ENCODE measurements at regions of chr11 and their contacts with region 1.

Region 1: GRCh38 chr11:47552566-47553416 is at the start of gene CELF1:
- DNase-seq: peak; percentile 87 to 94 (median 90)
- ATAC-seq: peak; percentile 96
- H3K4me3 ChIP-seq: peak within 1 kb of the TSS; percentile 100
- H3K27ac ChIP-seq: peak within 1 kb of the TSS; percentile 92
- H3K4me1 ChIP-seq: peaks cover 11 to 18% of the 10 kb centered on the region in 2 experiments; a peak in 4 of 5 replicates
- H3K27me3 ChIP-seq: no peaks in the 10 kb centered on the region
- CTCF ChIP-seq: peak; percentile 80 to 93 (median 92)
- EP300 ChIP-seq: no peak
- POLR2A ChIP-seq: peak; percentile 77
- RAD21 ChIP-seq: peak; percentile 22 to 54; a peak in 3 of 4 replicates
- polyA plus RNA-seq, gene CELF1: 11.3 to 21.6 TPM

Region 2: DNA sequence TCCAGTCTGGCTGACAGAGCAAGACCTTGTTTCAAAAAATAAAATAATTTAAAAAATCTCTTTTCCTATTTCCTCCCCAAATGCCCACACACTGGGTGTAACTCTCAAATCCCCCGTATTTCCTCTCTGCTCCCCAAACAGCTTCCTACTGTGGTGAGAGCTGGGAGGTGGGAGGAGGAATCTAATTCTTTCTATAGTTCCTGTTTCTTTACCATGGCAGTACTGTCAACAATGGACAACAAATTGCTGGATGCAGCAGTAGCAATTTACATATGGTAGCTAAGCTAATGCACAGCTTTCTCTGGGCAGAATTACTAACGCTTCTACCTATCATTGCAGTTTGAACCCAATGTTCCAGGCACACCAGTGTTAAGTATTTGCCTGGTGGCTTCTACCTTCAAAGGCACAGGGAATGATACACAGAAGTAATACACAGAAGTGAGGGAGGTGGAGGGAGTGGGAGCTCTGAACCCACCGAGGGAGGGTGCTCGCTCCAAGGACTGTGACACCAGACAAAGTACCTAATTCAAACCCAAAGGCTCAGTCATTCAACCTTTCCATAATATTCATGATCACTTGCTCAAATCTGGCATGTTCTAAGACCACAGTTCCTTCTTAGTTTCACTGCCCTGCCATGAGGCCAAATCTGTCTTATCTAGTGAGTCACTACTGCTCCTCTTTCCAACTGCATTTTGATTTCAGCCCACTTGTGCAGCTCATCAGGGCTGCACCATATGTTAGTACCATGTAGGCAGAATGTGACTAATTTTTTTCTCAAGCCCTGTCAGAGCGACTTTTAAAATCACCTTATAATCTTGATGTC is 37.8 kb before region 1 on chr11:
- CTCF ChIA-PET with region 1: no interaction called
- POLR2A ChIA-PET with region 1: interaction called, 3 read pairs
- in situ Hi-C with region 1: no loop called
- intact Hi-C with region 1: loop called (anchors 5 kb)
- DNase-seq: peak; percentile 33 to 70 (median 38)
- ATAC-seq: peak; percentile 63
- H3K4me3 ChIP-seq: no peak overlapping the region
- H3K27ac ChIP-seq: peak overlapping the region; percentile 48; the same call in 1 of the 3 replicates
- H3K4me1 ChIP-seq: peaks cover 37 to 59% of the 10 kb centered on the region in 2 experiments
- H3K27me3 ChIP-seq: no peaks in the 10 kb centered on the region
- CTCF ChIP-seq: no peak
- EP300 ChIP-seq: peak; percentile 33; the same call in 1 of the 2 replicates
- POLR2A ChIP-seq: no peak
- RAD21 ChIP-seq: no peak

Region 3: DNA sequence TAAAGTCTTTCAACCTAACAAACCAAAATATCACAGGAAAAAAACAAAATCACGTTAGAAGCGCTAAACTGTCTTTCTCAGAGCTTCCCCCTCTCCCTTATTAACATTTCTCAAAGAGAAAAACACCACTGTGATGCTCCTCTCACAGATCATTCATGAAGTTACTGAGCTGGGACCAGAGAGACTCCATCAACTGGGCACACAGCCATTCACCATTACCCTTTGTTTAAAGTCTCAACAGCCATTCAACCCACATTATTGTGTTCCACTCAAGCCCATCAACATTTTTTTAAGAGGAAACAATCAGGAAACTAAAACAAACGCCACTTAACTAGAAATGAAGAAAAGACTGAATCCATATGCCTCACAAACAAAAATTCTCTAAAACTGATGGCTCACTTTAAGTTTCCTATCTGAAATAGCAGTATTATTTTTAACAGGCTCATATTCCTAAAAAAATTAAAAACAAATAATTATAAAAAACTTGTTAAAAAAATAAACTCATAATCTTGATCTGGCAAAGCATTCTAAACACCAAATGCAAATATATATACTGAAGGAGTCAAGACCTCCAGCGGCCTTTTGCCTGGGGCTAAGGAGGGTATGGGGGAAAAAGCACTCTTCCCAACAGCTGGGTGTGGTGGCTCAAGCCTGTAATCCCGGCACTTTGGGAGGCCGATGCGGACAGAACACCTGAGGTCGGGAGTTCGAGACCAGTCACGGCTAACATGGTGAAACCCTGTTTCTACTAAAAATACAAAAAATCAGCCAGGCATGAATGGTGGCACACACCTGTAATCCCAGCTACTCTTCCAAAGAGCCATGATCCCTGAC is 13.8 kb before region 1 on chr11:
- CTCF ChIA-PET with region 1: no interaction called
- POLR2A ChIA-PET with region 1: interaction called, 28 read pairs
- in situ Hi-C with region 1: no loop called
- intact Hi-C with region 1: no loop called
- DNase-seq: no peak
- ATAC-seq: no peak
- H3K4me3 ChIP-seq: no peak overlapping the region
- H3K27ac ChIP-seq: no peak overlapping the region
- H3K4me1 ChIP-seq: peaks cover 4 to 5% of the 10 kb centered on the region in 2 experiments; a peak in 3 of 5 replicates
- H3K27me3 ChIP-seq: no peaks in the 10 kb centered on the region
- CTCF ChIP-seq: no peak
- EP300 ChIP-seq: no peak
- POLR2A ChIP-seq: no peak
- RAD21 ChIP-seq: no peak

Region 4: DNA sequence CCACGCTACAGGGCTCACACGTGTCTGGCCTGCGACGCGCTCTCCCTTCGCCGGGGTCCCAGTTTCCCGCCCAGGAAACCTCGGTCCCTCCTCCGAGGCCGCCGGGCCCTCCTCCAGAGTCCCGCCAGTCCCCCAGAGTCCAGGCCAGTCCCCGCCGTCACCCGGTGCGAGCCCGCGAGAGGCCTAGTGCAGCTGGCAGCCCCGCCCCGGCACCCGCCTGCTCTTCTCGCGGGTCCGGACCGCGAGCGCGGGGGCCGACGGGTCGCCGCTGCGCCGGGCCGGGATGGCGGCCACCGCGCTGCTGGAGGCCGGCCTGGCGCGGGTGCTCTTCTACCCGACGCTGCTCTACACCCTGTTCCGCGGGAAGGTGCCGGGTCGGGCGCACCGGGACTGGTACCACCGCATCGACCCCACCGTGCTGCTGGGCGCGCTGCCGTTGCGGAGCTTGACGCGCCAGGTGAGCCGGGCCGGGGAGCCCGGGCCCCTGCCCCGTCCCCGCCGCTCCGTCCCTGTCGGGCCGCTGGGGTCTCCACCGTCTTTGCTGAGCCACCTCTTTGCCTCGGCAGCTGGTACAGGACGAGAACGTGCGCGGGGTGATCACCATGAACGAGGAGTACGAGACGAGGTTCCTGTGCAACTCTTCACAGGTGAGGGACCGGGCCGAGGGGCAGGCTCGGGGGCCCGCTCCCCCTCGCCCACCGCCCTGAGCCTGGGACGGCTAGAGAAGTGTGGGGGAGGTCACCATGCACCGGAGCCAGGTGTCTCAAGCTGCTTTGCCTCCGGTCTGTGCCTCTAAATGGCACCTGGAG is 12.8 kb after region 1 on chr11 and contains the start of gene PTPMT1:
- CTCF ChIA-PET with region 1: no interaction called
- POLR2A ChIA-PET with region 1: interaction called, 21 read pairs
- in situ Hi-C with region 1: no loop called
- intact Hi-C with region 1: no loop called
- DNase-seq: peak; percentile 83 to 86 (median 85)
- ATAC-seq: peak; percentile 97
- H3K4me3 ChIP-seq: peak within 1 kb of the TSS; percentile 100
- H3K27ac ChIP-seq: peak within 1 kb of the TSS; percentile 96
- H3K4me1 ChIP-seq: peaks cover 10 to 40% of the 10 kb centered on the region in 2 experiments; a peak in 4 of 5 replicates
- H3K27me3 ChIP-seq: no peaks in the 10 kb centered on the region
- CTCF ChIP-seq: no peak
- EP300 ChIP-seq: no peak
- POLR2A ChIP-seq: peak; percentile 79
- RAD21 ChIP-seq: peak in 1 of 2 experiments; percentile 15; a peak in 1 of 4 replicates
- polyA plus RNA-seq, gene PTPMT1: 10.4 to 16.5 TPM